ENCODE measurements at regions of chr13 and their contacts with region 1.

Region 1: DNA sequence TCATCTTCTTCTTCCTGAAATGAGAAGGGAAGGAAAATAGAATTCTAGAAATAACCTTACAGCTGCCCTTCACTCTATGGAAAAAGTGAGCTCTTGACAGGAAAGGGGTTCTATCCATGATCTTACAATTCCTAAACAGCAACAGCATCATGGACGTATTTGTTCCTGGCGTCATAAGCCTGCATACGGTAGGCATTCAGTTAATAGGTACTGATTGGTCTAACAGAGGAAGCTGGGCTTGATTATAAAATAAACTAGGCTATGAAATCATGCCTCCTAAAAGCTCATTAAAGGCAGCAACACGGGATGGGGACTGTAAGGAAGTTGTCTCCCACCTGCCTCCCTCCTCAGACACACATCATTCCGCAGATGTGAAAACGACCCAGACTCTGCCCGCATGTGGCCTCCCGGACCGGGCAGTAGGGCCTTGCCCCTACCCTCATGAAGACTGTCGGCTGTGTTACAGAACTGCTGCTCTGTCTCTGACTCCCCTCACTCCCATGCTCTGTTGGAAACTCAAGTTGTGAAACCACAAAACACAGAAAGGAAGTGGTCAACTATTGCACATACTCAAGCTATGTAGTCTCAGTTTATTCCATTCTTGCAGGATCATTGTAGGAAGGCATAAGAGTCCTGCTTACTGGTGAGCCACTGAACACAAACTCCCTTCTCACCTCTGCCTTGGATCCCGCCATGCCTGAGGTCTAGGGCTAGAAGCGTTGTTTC is 129.8 kb downstream of the DLEU7 start:
- DNase-seq: no peak
- ATAC-seq: peak; percentile 78
- H3K4me3 Mint-ChIP-seq: peak overlapping the region; percentile 70
- H3K27ac Mint-ChIP-seq: peak overlapping the region; percentile 70
- H3K4me1 Mint-ChIP-seq: peaks cover 31% of the 10 kb centered on the region
- H3K27me3 Mint-ChIP-seq: no peaks in the 10 kb centered on the region
- CTCF ChIP-seq: no peak

Region 2: GRCh38 chr13:50494138-50494537 is 219.5 kb before region 1 on chr13:
- CTCF ChIA-PET with region 1: no interaction called
- POLR2A ChIA-PET with region 1: no interaction called
- intact Hi-C with region 1: no loop called
- DNase-seq: no peak
- ATAC-seq: no peak
- H3K4me3 Mint-ChIP-seq: no peak overlapping the region
- H3K27ac Mint-ChIP-seq: no peak overlapping the region
- H3K4me1 Mint-ChIP-seq: no peaks in the 10 kb centered on the region
- H3K27me3 Mint-ChIP-seq: no peaks in the 10 kb centered on the region
- CTCF ChIP-seq: no peak

Region 3: GRCh38 chr13:50729177-50729576 is 15.5 kb after region 1 on chr13:
- CTCF ChIA-PET with region 1: no interaction called
- POLR2A ChIA-PET with region 1: no interaction called
- intact Hi-C with region 1: loop called (anchors 2 kb)
- DNase-seq: no peak
- ATAC-seq: no peak
- H3K4me3 Mint-ChIP-seq: no peak overlapping the region
- H3K27ac Mint-ChIP-seq: no peak overlapping the region
- H3K4me1 Mint-ChIP-seq: peaks cover 36% of the 10 kb centered on the region
- H3K27me3 Mint-ChIP-seq: no peaks in the 10 kb centered on the region
- CTCF ChIP-seq: no peak

Measured in activated B cell treated with CpG ODN at 0.5 μM for 24 hours (primary cell).